ENCODE measurements at regions of chr1 and their contacts with region 1.

Region 1: GRCh38 chr1:147389532-147390524 is 147.3 kb downstream of the CHD1L start:
- DNase-seq: no peak
- H3K4me3 ChIP-seq: no peak overlapping the region
- H3K27ac ChIP-seq: no peak overlapping the region
- H3K27me3 ChIP-seq: no peaks in the 10 kb centered on the region
- CTCF ChIP-seq: peak; percentile 29 to 77 (median 67)

Region 2: DNA sequence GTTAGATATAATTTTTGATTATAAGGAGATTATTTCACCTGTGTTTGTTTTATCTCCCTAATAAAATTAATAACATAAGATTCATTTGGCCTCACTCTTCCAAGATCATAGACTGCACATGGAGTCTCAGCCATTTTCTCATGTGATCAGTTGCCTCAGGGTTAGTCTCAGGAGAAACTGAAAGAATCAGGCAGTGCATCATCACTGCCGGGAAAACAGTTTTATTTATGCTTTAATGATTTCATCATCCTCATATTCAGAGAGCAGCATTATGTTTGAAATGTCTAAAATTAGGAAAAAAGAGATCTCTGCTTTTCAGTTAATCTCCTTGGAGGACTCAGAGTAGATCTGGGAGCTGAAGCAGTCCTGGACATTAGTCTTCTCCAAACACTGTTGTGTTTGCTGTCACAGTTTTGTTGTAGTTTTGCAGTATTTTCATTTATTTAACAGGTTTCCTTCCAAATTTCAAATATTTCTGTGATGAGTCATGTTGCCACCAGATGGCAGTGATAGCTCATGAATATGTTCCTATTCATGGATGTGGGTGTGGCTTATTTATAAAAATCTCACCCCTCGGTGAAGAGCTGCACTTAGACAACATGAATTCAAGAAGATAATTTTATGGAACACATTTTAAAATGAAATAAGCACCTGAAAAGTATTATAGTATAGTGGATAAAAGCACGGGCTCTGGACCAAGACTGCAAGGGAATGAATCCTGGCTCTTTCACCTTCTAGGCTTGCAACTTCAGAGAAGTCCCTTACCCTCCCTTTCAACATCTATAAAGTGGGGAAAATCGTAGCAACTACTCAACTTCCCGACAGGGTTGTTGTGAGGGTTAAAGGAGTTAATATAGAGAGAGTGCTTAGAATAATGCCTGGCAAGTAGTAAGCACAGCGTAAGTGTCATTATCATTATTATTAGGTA is 116.2 kb before region 1 on chr1:
- intact Hi-C with region 1: loop called (anchors 5 kb)
- DNase-seq: peak in 2 of 10 donors; percentile 16 to 18
- H3K4me3 ChIP-seq: no peak overlapping the region
- H3K27ac ChIP-seq: peak overlapping the region in 9 of 59 donors; percentile 4 to 56 (median 32)
- H3K27me3 ChIP-seq: no peaks in the 10 kb centered on the region
- CTCF ChIP-seq: peak; percentile 59 to 92 (median 76)